K562 (cell line): ENCODE measurements at regions of chr2 and their contacts with region 1.

Region 1: DNA sequence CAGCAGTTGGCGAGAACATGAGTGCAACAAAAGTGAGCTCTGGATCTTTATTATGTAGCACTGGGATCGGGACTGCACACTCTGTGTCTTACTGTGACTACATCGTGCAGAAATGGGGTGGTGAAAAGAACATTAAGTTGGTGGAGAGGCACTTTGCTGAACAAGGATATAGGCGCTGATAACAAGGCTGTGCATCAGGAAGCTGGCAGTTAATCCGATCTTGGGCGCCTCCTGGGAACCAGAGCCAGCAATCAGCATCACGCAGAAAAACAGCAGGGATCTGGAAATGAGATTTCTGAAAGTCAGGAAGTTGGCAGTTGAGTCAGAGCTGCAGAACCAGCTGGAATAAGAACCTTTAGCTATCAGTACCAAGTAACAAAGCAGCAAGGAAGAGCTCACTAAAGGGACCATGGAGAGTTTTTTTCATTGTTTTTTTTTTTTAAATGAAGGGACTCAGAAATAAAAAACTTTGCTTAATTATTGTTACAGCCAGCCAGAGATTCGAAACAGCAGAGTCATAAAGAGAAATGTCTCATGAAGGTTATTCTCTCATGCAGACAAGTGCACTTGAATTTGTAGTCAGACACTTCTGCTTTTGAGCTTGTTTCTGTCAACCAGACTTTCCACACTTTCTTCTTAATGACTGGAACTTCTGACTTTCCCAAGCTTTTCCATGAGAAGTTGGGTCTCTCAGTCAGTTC is 22.8 kb upstream of the MYO3B start:
- DNase-seq: peak; percentile 61 to 78 (median 64)
- ATAC-seq: peak; percentile 62
- H3K4me3 ChIP-seq: no peak overlapping the region
- H3K27ac ChIP-seq: peak overlapping the region; percentile 29; the same call in 1 of the 3 replicates
- H3K4me1 ChIP-seq: peaks cover 14 to 28% of the 10 kb centered on the region in 2 experiments
- H3K27me3 ChIP-seq: no peaks in the 10 kb centered on the region
- CTCF ChIP-seq: peak; percentile 3 to 38 (median 18); a peak in 2 of 6 replicates
- EP300 ChIP-seq: peak; percentile 83
- POLR2A ChIP-seq: no peak
- RAD21 ChIP-seq: peak; percentile 28 to 52; a peak in 3 of 4 replicates

Region 2: DNA sequence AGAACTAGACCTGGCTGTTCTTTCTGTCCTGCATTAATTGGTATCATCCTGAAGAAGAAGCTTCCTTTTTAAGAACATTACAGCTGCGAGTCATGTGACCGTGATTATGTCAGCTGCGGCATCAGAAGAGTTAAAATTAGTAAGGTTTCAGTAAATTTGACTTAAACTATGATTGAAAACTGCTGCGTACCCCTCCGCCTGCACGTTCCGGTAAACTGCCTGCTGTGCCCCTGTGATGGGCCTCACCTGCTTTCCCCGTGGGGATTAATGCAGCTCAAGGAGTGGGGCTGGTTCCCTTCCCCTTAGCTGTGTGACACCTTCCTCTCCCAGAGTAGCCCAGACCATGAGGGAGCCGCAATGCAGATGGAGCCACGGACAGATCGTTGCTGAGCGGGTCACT is 13.3 kb before region 1 on chr2:
- CTCF ChIA-PET with region 1: no interaction called
- POLR2A ChIA-PET with region 1: interaction called, 23 read pairs
- in situ Hi-C with region 1: no loop called
- intact Hi-C with region 1: no loop called
- DNase-seq: no peak
- ATAC-seq: no peak
- H3K4me3 ChIP-seq: no peak overlapping the region
- H3K27ac ChIP-seq: no peak overlapping the region
- H3K4me1 ChIP-seq: peaks cover 28 to 44% of the 10 kb centered on the region in 2 experiments
- H3K27me3 ChIP-seq: no peaks in the 10 kb centered on the region
- CTCF ChIP-seq: no peak
- EP300 ChIP-seq: no peak
- POLR2A ChIP-seq: no peak
- RAD21 ChIP-seq: no peak